ENCODE measurements at regions of chr11 and their contacts with region 1.

Region 1: GRCh38 chr11:125404776-125405435 is 91.2 kb downstream of the FEZ1 start:
- DNase-seq: peak; percentile 60
- ATAC-seq: peak; percentile 98
- H3K4me3 Mint-ChIP-seq: no peak overlapping the region
- H3K27ac Mint-ChIP-seq: no peak overlapping the region
- H3K4me1 Mint-ChIP-seq: peaks cover 4% of the 10 kb centered on the region
- H3K27me3 Mint-ChIP-seq: peaks cover 60% of the 10 kb centered on the region
- CTCF ChIP-seq: peak; percentile 66

Region 2: GRCh38 chr11:125091247-125091876 is 313.5 kb before region 1 on chr11:
- CTCF ChIA-PET with region 1: no interaction called
- POLR2A ChIA-PET with region 1: no interaction called
- intact Hi-C with region 1: loop called (anchors 1 kb)
- DNase-seq: no peak
- ATAC-seq: peak; percentile 37
- H3K4me3 Mint-ChIP-seq: no peak overlapping the region
- H3K27ac Mint-ChIP-seq: no peak overlapping the region
- H3K4me1 Mint-ChIP-seq: peaks cover 2% of the 10 kb centered on the region
- H3K27me3 Mint-ChIP-seq: no peaks in the 10 kb centered on the region
- CTCF ChIP-seq: no peak

Region 3: DNA sequence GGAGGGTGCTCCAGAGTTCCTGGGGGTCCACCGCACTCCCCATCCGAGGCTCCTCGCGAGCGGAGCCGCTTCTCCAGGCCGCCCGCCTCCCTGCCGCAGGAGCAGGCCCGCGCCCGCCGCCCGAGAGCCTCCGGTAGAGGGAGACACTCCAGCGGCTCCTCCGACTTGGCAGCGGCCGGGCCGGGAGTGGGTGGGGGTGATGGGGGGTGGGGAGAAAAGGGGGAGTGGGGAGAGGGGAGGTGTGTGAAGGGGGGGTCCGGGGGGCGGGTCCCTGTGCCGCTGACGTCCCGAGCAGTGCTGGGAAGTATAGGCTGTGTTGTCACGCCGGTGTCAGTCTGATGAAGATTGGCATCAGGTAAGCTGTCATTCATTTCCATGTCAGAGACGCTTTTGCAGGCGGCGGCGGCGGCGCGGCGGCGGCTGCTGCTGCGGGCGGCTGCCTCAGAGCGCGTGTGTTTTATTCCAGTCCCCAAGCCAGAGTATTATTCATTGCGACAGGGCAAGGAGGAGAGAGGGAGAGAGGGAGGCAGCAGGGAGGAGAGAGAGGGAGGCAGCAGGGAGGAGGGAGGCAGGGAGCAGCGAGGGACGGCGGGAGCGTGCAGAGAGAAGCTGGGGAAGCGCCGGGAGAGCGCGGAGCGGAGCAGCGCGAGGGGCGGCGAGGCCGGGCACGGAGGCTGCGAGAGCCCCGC is 240.3 kb before region 1 on chr11 and contains the start of gene PKNOX2:
- CTCF ChIA-PET with region 1: no interaction called
- POLR2A ChIA-PET with region 1: no interaction called
- intact Hi-C with region 1: loop called (anchors 10 kb)
- DNase-seq: peak; percentile 39
- ATAC-seq: peak; percentile 61
- H3K4me3 Mint-ChIP-seq: peak within 1 kb of the TSS; percentile 91
- H3K27ac Mint-ChIP-seq: no peak within 1 kb of the TSS
- H3K4me1 Mint-ChIP-seq: peaks cover 21% of the 10 kb centered on the region
- H3K27me3 Mint-ChIP-seq: peaks cover 64% of the 10 kb centered on the region
- CTCF ChIP-seq: no peak
- total RNA-seq, gene PKNOX2: not detected in 2 replicates

Region 4: GRCh38 chr11:125348674-125349309 is 56.1 kb before region 1 on chr11:
- CTCF ChIA-PET with region 1: no interaction called
- POLR2A ChIA-PET with region 1: no interaction called
- intact Hi-C with region 1: loop called (anchors 2 kb)
- DNase-seq: peak; percentile 31
- ATAC-seq: peak; percentile 54
- H3K4me3 Mint-ChIP-seq: no peak overlapping the region
- H3K27ac Mint-ChIP-seq: no peak overlapping the region
- H3K4me1 Mint-ChIP-seq: no peaks in the 10 kb centered on the region
- H3K27me3 Mint-ChIP-seq: peaks cover 21% of the 10 kb centered on the region
- CTCF ChIP-seq: peak; percentile 40

Measured in activated B cell treated with CpG ODN at 0.5 μM for 24 hours (primary cell).